Mammary epithelial cell (primary cell): ENCODE measurements at regions of chr7 and their contacts with region 1.

Region 1: DNA sequence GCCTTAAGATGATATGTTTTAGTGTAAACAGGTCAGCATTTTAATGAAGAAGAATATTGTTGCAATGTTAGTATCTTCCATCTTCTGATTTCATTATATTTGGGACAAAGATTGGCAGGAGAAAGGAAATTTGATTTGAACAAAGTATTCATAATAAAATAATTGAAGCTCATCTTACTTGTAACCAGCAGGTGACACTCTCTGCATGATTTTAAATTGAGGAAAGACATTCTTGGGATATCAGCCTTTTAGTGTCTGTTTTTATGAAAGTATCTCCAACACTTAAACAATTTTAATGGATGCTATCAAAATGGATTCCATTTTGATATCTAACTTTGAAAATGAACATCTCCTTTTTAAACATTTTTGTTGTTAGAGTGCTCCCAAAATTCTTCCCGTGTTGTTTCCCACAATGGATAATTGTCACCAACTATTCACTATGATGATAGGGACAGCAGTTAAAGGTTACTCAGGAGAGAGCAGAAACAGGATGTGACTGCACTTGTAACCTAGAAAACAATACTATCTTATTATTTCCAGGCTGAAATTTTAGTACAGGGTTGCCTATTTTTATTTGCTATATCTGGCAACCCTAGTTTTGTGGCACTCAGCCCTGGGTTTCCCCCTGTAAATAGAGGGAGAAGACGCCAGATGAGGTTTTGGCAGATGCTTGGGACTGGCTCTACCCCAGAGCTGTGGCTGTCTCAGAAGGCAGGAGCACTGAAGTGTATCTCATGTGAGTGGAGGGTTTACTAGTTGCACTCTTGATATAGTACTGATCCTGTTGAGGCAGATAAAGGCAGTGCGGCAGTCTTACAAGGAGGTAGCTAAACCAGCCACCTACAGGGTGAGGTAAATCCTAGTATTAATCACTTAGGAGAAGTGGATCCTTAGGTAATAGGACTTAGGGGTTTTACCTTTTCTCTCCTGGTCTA is 31.0 kb upstream of the ABCB4 start:
- DNase-seq: peak; percentile 5
- H3K4me3 ChIP-seq: no peak overlapping the region
- H3K27ac ChIP-seq: no peak overlapping the region
- H3K4me1 ChIP-seq: no peaks in the 10 kb centered on the region
- H3K27me3 ChIP-seq: peaks cover 2% of the 10 kb centered on the region
- CTCF ChIP-seq: peak; percentile 54 to 58

Region 2: DNA sequence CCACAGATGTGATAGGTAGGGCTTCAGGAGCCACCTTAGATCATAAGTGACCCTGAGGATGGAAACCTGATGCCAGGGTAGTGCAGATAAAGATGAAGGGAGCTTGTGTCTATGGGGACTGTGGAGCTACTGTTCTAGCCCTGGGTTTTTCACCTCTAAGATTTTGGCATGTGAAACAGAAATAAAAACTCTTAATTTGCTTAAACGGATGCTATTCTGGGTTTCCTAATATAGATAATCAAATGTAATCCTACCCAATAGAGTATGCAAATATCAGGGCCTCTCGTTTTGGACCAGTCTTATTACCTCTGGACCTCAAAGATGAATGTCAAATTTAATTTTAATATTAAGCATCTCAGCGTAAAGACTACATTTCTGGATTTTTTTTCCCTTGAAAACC is 80.4 kb before region 1 on chr7:
- CTCF ChIA-PET with region 1: no interaction called
- dilution Hi-C with region 1: no loop called
- in situ Hi-C with region 1: no loop called
- intact Hi-C with region 1: no loop called
- DNase-seq: no peak
- H3K4me3 ChIP-seq: no peak overlapping the region
- H3K27ac ChIP-seq: no peak overlapping the region
- H3K4me1 ChIP-seq: no peaks in the 10 kb centered on the region
- H3K27me3 ChIP-seq: no peaks in the 10 kb centered on the region
- CTCF ChIP-seq: no peak

Region 3: DNA sequence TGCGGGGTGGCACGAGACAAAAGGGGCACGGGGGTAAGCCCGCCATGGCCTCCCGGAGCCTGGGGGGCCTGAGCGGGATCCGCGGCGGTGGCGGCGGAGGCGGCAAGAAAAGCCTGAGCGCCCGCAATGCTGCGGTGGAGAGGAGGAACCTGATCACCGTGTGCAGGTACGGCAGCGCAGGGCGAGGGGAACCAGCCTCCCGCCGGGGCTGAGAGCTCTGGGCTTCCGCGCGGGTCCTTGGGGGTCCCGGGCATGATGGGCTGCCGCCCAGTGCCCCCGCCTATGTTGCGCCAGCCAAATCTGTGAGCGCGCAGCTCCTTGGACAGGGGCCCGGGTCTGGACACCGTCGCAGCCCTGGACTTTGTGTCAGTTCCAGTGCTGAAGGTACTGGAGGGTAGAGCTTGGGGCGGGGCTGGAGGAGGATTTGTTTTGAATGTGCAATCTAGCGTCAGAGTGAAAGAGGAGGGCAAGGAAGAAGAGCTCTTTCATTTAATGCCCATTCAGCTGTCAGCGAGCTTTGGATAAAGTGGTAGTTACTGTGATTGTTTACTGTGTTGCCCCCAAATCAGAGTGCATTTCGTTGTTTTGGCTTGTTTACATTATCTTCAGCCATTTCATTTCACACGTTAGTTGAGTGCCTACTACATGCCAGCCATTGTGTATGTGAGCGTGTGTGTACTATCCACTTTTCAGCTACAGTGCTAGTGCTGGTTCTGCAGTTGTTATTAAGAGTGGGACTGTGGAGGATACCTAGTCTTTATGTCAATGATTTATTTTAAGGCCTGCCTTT is 122.5 kb after region 1 on chr7:
- CTCF ChIA-PET with region 1: interaction called, 7 read pairs
- dilution Hi-C with region 1: no loop called
- in situ Hi-C with region 1: no loop called
- intact Hi-C with region 1: loop called (anchors 1 kb)
- DNase-seq: peak; percentile 49
- H3K4me3 ChIP-seq: peak overlapping the region; percentile 76 to 82 (median 81)
- H3K27ac ChIP-seq: no peak overlapping the region
- H3K4me1 ChIP-seq: peaks cover 18% of the 10 kb centered on the region
- H3K27me3 ChIP-seq: no peaks in the 10 kb centered on the region
- CTCF ChIP-seq: no peak

Region 4: DNA sequence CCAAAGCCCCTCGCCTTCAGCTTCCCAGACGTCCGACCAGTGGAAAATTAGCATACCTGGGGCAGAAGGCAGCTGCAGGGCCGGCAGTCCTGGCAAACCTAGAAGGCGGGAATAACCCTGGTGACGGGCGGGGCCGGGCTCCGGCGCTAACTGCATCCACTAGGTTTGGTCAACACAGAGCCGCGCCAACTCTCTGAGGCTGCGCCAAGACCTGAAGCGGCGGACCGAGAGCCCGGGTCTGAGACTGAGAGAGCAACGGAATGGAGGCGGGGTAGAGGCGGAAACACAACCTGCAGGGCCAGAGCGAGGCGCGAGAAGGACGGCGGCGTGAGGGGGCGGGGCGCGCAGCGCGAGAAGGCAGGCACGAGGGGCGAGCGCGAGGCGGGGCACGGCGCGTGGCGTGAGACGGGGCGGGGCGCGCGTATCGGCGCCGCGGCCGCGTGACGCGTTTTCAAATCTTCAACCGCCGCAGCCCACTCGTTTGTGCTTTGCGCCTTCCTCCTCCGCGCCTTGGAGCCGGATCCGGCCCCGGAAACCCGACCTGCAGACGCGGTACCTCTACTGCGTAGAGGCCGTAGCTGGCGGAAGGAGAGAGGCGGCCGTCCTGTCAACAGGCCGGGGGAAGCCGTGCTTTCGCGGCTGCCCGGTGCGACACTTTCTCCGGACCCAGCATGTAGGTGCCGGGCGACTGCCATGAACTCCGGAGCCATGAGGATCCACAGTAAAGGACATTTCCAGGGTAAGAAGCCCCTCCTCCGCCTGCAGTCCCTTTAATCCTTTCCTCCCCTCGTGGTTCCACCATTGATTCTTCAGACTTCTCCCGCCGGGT is 369.7 kb after region 1 on chr7 and contains the starts of genes DBF4 and SLC25A40:
- CTCF ChIA-PET with region 1: interaction called, 3 read pairs
- dilution Hi-C with region 1: no loop called
- in situ Hi-C with region 1: loop called (anchors 10 to 25 kb)
- intact Hi-C with region 1: no loop called
- DNase-seq: peak; percentile 97
- H3K4me3 ChIP-seq: peak within 1 kb of the TSS; percentile 81 to 91 (median 87)
- H3K27ac ChIP-seq: peak within 1 kb of the TSS; percentile 89
- H3K4me1 ChIP-seq: peaks cover 14% of the 10 kb centered on the region
- H3K27me3 ChIP-seq: no peaks in the 10 kb centered on the region
- CTCF ChIP-seq: no peak
- total RNA-seq, gene DBF4: 11.2 to 29.3 TPM
- total RNA-seq, gene SLC25A40: 9.5 to 14.1 TPM

Region 5: GRCh38 chr7:88111136-88111743 is 604.7 kb after region 1 on chr7:
- CTCF ChIA-PET with region 1: no interaction called
- dilution Hi-C with region 1: no loop called
- in situ Hi-C with region 1: loop called (anchors 25 kb)
- intact Hi-C with region 1: loop called (anchors 2 kb)
- DNase-seq: peak; percentile 23
- H3K4me3 ChIP-seq: no peak overlapping the region
- H3K27ac ChIP-seq: no peak overlapping the region
- H3K4me1 ChIP-seq: no peaks in the 10 kb centered on the region
- H3K27me3 ChIP-seq: no peaks in the 10 kb centered on the region
- CTCF ChIP-seq: peak; percentile 38 to 54